Activated naive CD4-positive, alpha-beta T cell treated with anti-CD3 and anti-CD28 coated beads for 36 hours (primary cell): ENCODE measurements at regions of chr2 and their contacts with region 1.

Region 1: GRCh38 chr2:43559391-43560230 is 36.2 kb downstream of the THADA start:
- DNase-seq: peak; percentile 28
- H3K4me3 Mint-ChIP-seq: peak overlapping the region; percentile 24
- H3K27ac Mint-ChIP-seq: peak overlapping the region; percentile 93
- H3K4me1 Mint-ChIP-seq: peaks cover 38% of the 10 kb centered on the region
- H3K27me3 Mint-ChIP-seq: no peaks in the 10 kb centered on the region

Region 2: DNA sequence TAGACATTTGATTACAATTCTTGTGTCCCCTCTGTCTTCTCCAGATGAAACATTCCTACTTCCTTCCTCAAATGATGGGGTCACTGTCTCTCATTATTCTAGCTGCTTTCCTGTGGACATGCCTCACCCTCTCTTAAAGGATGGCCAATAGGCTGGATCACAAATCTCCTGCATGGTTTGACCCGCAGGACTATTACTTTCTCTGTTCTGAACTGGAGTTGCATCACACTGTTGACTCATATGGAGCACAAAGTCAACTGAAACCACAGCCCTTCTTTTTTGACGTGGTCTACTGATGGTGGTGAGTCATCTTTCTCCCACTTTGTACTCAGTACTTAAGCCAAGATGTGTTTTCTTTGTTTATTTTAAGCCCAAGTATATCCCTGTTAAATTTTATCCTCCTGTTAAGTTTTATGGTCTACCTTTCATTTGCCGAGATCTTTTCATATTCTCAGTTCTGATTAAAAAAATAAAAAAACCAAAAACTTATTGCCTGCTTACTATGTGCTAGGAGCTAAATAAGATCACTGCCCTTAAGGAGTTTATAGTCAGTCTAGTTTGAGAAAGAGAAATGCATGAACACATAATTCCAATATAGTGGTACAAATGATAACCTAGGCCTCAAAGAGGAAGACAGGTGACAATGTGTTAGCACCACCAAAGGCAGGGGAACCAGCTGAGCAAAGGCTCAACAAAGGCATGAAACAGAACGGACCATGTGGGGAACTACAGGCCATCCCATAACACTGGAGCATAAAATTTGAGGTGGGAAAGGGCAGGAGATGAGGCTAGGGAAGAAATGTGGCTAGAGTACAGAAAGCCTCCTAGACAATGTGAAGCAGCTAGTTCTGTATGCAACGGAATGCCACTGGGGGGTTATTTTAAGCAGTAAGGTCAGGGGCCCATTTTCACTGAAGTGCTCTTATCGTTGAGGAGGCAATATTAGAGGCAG is 265.6 kb before region 1 on chr2:
- CTCF ChIA-PET with region 1: no interaction called
- intact Hi-C with region 1: loop called (anchors 5 kb)
- DNase-seq: peak; percentile 77
- H3K4me3 Mint-ChIP-seq: no peak overlapping the region
- H3K27ac Mint-ChIP-seq: peak overlapping the region; percentile 81
- H3K4me1 Mint-ChIP-seq: peaks cover 29% of the 10 kb centered on the region
- H3K27me3 Mint-ChIP-seq: no peaks in the 10 kb centered on the region

Region 3: DNA sequence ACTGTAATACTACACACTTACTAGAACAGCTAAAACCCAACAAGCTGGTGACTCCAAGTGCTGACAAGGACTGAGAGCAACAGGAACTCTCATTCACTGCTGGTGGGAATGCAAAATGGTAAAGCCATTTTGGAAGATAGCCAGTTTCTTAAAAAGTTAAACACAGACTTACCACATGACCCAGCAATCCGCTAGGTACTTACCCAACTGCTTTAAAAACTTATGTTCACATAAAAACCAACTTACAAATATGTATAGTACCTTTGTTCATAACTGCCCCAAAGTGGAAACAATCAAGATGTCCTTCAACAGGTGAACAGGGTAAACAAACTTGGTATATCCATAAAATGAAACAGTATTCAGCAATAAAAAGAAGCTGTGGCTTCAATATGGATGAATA is 180.1 kb before region 1 on chr2:
- CTCF ChIA-PET with region 1: no interaction called
- intact Hi-C with region 1: no loop called
- DNase-seq: no peak
- H3K4me3 Mint-ChIP-seq: no peak overlapping the region
- H3K27ac Mint-ChIP-seq: no peak overlapping the region
- H3K4me1 Mint-ChIP-seq: peaks cover 10% of the 10 kb centered on the region
- H3K27me3 Mint-ChIP-seq: no peaks in the 10 kb centered on the region

Region 4: GRCh38 chr2:43412121-43412753 is 147.4 kb before region 1 on chr2:
- CTCF ChIA-PET with region 1: no interaction called
- intact Hi-C with region 1: no loop called
- DNase-seq: no peak
- H3K4me3 Mint-ChIP-seq: no peak overlapping the region
- H3K27ac Mint-ChIP-seq: no peak overlapping the region
- H3K4me1 Mint-ChIP-seq: peaks cover 4% of the 10 kb centered on the region
- H3K27me3 Mint-ChIP-seq: no peaks in the 10 kb centered on the region

Region 5: DNA sequence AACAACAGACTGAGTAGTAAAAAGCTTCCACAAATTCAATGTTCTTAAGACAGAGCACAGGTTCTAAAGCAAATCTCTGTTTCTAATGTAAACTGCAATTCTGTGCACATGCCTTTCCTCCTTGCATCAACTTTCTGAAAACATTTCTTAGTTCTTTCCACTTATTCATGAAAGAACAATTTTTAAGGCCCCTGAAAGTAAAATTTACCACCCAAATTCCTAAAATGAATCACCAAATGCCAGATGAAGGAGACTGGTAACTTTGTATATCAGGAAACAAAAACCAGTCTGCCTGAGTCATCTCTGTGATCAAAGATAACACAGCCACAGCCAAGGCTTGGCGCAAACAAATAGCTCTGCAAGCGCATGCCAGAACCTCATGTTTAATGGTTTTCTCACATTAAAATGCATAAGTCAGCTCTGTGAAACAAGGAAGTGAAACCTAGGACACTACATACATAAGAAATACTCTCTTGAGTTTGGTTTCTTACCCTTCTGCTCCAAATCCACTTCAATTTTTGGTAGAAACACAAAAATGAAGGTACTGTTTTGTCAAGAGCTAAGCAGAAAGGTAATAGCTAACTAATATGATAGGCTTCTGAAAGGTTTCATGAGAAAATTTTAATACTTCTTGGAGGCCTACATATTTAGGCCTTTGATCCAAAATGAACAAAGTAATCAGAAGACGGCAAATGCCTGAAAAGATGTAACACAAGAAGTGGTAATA is 133.1 kb before region 1 on chr2:
- CTCF ChIA-PET with region 1: no interaction called
- intact Hi-C with region 1: loop called (anchors 1 kb)
- DNase-seq: peak; percentile 80
- H3K4me3 Mint-ChIP-seq: no peak overlapping the region
- H3K27ac Mint-ChIP-seq: peak overlapping the region; percentile 14
- H3K4me1 Mint-ChIP-seq: peaks cover 31% of the 10 kb centered on the region
- H3K27me3 Mint-ChIP-seq: no peaks in the 10 kb centered on the region

Region 6: GRCh38 chr2:43576981-43577892 is 17.6 kb after region 1 on chr2:
- CTCF ChIA-PET with region 1: interaction called, 36 read pairs
- intact Hi-C with region 1: loop called (anchors 2 kb)
- DNase-seq: peak; percentile 38
- H3K4me3 Mint-ChIP-seq: no peak overlapping the region
- H3K27ac Mint-ChIP-seq: no peak overlapping the region
- H3K4me1 Mint-ChIP-seq: peaks cover 7% of the 10 kb centered on the region
- H3K27me3 Mint-ChIP-seq: no peaks in the 10 kb centered on the region